CD8-positive, alpha-beta T cell (primary cell): ENCODE measurements at regions of chr10 and their contacts with region 1.

Region 1: DNA sequence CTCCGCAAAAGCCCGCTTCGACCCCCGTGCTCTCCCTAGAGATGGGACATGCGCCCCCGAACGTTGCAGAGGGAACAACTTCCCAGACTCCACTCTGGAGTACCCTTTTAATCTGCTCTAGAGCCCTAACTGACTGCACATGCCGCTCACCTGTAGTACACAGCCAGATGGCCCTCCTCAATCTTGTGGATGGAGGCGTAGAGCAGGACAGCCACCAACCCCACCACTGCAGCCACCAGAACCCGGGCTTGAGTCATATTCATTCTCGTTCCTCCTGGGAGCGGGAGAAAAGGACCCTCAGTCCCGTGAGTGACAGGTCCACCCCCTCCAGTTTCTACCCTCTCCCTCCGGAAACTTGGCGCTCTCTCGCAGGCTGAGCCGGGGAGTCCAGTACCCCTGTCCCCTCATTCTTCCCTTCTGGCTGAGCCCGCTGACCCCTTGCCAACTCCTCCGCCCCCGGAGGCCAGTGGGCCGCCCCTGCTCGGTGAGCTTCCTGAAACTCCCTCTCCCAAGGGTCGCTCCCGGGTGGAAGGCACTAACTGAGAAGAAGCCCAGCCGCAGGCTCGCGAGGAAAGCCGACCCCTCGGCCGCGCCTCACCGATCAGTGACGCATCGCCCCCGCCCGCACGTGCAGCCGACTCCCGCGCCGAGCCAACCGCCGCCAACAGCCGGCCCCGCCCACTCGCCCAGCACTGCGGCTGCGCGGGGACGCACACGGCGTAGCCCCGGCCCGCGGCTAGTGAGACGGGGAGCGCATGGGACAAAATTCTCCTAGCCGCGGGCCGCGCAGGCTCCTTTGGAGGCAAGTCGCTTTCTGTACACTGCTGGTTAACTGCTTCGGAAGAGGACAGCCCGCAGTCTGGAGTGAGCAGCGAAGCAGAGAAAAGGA is at the start of gene ERLIN1:
- DNase-seq: peak; percentile 78 to 95 (median 91)
- ATAC-seq: peak; percentile 93
- H3K4me3 ChIP-seq: peak within 1 kb of the TSS; percentile 68 to 96
- H3K4me3 Mint-ChIP-seq: peak within 1 kb of the TSS; percentile 98
- H3K27ac ChIP-seq: peak within 1 kb of the TSS; percentile 85 to 89
- H3K27ac Mint-ChIP-seq: peak within 1 kb of the TSS; percentile 95
- H3K4me1 ChIP-seq: peaks cover 24% of the 10 kb centered on the region
- H3K4me1 Mint-ChIP-seq: peaks cover 64% of the 10 kb centered on the region
- H3K27me3 ChIP-seq: no peaks in the 10 kb centered on the region
- H3K27me3 Mint-ChIP-seq: no peaks in the 10 kb centered on the region
- CTCF ChIP-seq: no peak
- total RNA-seq, gene ERLIN1: 2.0 to 3.1 TPM

Region 2: GRCh38 chr10:100229819-100230422 is 44.3 kb after region 1 on chr10:
- CTCF ChIA-PET with region 1: no interaction called
- POLR2A ChIA-PET with region 1: no interaction called
- intact Hi-C with region 1: loop called (anchors 1 kb)
- DNase-seq: peak in 1 of 9 experiments; percentile 9
- ATAC-seq: no peak
- H3K4me3 ChIP-seq: peak overlapping the region; percentile 66 to 99
- H3K4me3 Mint-ChIP-seq: peak overlapping the region; percentile 93
- H3K27ac ChIP-seq: peak overlapping the region; percentile 83 to 89
- H3K27ac Mint-ChIP-seq: peak overlapping the region; percentile 95
- H3K4me1 ChIP-seq: peaks cover 21% of the 10 kb centered on the region
- H3K4me1 Mint-ChIP-seq: peaks cover 32% of the 10 kb centered on the region
- H3K27me3 ChIP-seq: no peaks in the 10 kb centered on the region
- H3K27me3 Mint-ChIP-seq: no peaks in the 10 kb centered on the region
- CTCF ChIP-seq: no peak

Region 3: DNA sequence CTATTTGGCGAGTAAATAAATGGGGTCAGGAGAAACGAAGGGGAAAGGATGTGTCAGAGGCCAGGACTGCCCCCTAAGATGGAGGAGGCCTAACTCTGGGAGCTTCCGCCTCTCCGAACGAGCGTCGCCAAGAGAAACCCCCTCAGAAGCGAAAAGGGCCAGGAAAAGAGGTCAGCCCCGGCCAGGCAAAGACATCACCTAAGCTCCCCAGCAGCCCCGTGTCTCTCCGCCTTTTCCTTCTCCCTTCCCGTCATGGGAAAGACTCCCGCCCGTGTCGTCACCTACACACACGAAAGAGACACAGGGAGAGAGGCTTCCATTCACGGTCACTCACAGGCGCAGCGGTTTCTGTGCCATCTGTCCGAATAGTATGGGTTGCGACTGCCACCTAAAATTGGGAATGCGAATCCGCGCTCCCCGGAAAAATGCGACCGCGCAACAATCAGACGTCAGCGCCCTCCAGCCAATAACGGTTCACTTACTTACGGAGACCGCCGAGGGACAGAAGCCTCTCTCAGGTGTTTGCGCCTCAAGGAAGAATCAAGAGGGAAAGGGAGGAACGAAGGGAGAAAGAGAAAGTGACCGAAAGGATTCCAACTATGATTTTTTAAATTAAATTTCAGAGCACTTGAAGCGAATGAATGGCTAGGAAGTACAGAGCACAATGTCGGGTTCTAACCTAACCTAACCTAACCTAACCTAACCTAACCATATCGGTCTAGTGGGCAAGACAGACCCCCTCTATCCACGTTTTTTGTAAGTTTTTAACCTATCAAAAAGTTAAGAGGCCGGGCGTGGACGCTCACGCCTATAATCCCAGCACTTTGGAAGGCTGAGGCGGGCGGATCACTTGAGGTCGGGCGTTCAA is 81.9 kb after region 1 on chr10 and contains the start of gene CWF19L1:
- CTCF ChIA-PET with region 1: no interaction called
- POLR2A ChIA-PET with region 1: no interaction called
- intact Hi-C with region 1: loop called (anchors 1 kb)
- DNase-seq: peak; percentile 48 to 88 (median 76)
- ATAC-seq: peak; percentile 88
- H3K4me3 ChIP-seq: peak within 1 kb of the TSS; percentile 87 to 100
- H3K4me3 Mint-ChIP-seq: peak within 1 kb of the TSS; percentile 100
- H3K27ac ChIP-seq: peak within 1 kb of the TSS; percentile 81 to 95
- H3K27ac Mint-ChIP-seq: peak within 1 kb of the TSS; percentile 100
- H3K4me1 ChIP-seq: peaks cover 22% of the 10 kb centered on the region
- H3K4me1 Mint-ChIP-seq: peaks cover 33% of the 10 kb centered on the region
- H3K27me3 ChIP-seq: no peaks in the 10 kb centered on the region
- H3K27me3 Mint-ChIP-seq: no peaks in the 10 kb centered on the region
- CTCF ChIP-seq: no peak
- total RNA-seq, gene CWF19L1: 70.9 to 83.7 TPM

Region 4: DNA sequence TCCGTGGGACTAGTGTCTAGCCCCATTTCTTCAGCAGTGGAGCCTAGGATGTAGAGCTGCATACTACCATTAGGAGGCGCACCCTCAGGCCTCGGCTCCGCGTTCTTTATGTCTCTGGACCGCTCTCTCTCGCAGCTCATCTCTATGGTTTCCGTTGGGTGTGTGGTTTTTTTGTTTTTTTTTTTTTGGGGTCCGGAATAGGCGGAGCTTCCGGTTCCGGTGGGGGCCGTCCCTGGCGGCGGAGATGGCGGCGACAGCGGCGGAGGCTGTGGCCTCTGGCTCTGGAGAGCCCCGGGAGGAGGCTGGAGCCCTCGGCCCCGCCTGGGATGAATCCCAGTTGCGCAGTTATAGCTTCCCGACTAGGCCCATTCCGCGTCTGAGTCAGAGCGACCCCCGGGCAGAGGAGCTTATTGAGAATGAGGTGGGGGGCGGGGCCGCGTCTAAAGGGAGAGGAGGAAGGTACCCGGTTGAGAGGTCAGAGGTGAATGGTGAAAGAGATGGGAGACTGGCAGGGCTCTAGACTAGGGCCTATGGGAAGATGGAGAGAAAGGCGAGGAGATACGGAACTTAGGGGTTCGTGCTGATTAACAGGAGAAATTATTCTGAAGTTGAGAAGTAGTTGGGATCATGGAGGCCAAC is 350.2 kb after region 1 on chr10 and contains the start of gene HIF1AN:
- CTCF ChIA-PET with region 1: no interaction called
- POLR2A ChIA-PET with region 1: no interaction called
- intact Hi-C with region 1: loop called in 1 of 2 experiments (anchors 10 kb)
- DNase-seq: peak; percentile 73 to 97 (median 88)
- ATAC-seq: peak; percentile 99
- H3K4me3 ChIP-seq: peak within 1 kb of the TSS; percentile 59 to 82
- H3K4me3 Mint-ChIP-seq: no peak within 1 kb of the TSS
- H3K27ac ChIP-seq: peak within 1 kb of the TSS; percentile 55 to 75
- H3K27ac Mint-ChIP-seq: no peak within 1 kb of the TSS
- H3K4me1 ChIP-seq: peaks cover 29% of the 10 kb centered on the region
- H3K4me1 Mint-ChIP-seq: peaks cover 19% of the 10 kb centered on the region
- H3K27me3 ChIP-seq: no peaks in the 10 kb centered on the region
- H3K27me3 Mint-ChIP-seq: no peaks in the 10 kb centered on the region
- CTCF ChIP-seq: peak; percentile 92
- total RNA-seq, gene HIF1AN: 28.0 to 31.2 TPM